ENCODE measurements at regions of chr11 and their contacts with region 1.

Region 1: GRCh38 chr11:111841370-111842053 is 29.9 kb downstream of the ALG9 start:
- DNase-seq: peak; percentile 82
- H3K4me3 Mint-ChIP-seq: no peak overlapping the region
- H3K27ac Mint-ChIP-seq: no peak overlapping the region
- H3K4me1 Mint-ChIP-seq: no peaks in the 10 kb centered on the region
- H3K27me3 Mint-ChIP-seq: no peaks in the 10 kb centered on the region
- CTCF ChIP-seq: peak; percentile 79

Region 2: GRCh38 chr11:111565114-111565720 is 276.3 kb before region 1 on chr11:
- CTCF ChIA-PET with region 1: interaction called, 7 read pairs
- POLR2A ChIA-PET with region 1: no interaction called
- intact Hi-C with region 1: loop called (anchors 1 kb)
- DNase-seq: peak; percentile 75
- H3K4me3 Mint-ChIP-seq: no peak overlapping the region
- H3K27ac Mint-ChIP-seq: no peak overlapping the region
- H3K4me1 Mint-ChIP-seq: peaks cover 13% of the 10 kb centered on the region
- H3K27me3 Mint-ChIP-seq: no peaks in the 10 kb centered on the region
- CTCF ChIP-seq: peak; percentile 70

Region 3: GRCh38 chr11:111586388-111586831 is 255.1 kb before region 1 on chr11:
- CTCF ChIA-PET with region 1: interaction called, 23 read pairs
- POLR2A ChIA-PET with region 1: interaction called, 3 read pairs
- intact Hi-C with region 1: loop called (anchors 1 kb)
- DNase-seq: peak; percentile 55
- H3K4me3 Mint-ChIP-seq: no peak overlapping the region
- H3K27ac Mint-ChIP-seq: no peak overlapping the region
- H3K4me1 Mint-ChIP-seq: no peaks in the 10 kb centered on the region
- H3K27me3 Mint-ChIP-seq: no peaks in the 10 kb centered on the region
- CTCF ChIP-seq: peak; percentile 40

Measured in MCF 10A (cell line).